ENCODE measurements at regions of chr1 and their contacts with region 1.

Region 1: DNA sequence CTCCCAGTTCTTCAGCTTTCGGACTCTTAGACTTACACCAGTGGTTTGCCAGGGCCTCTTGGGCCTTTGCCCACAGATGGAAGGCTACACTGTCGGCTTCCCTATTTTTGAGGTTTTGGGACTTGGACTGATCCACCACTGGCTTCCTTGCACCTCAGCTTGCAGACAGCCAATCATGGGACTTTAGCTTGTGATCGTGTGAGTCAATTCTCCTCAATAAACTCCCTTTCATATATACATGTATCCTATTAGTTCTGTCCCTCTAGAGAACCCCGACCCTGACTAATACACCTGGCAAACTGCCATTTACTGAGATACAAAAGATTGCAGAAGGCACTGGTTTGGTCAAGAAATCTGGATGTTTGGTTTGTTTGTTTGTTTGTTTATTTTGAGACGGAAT is 6.4 kb upstream of the RAB4A start:
- DNase-seq: no peak
- H3K4me3 ChIP-seq: no peak overlapping the region
- H3K27ac ChIP-seq: no peak overlapping the region
- H3K4me1 ChIP-seq: no peaks in the 10 kb centered on the region
- H3K27me3 ChIP-seq: no peaks in the 10 kb centered on the region
- CTCF ChIP-seq: no peak

Region 2: GRCh38 chr1:228527596-228527995 is 736.9 kb before region 1 on chr1:
- CTCF ChIA-PET with region 1: no interaction called
- POLR2A ChIA-PET with region 1: no interaction called
- intact Hi-C with region 1: no loop called
- DNase-seq: no peak
- H3K4me3 ChIP-seq: no peak overlapping the region
- H3K27ac ChIP-seq: no peak overlapping the region
- H3K4me1 ChIP-seq: no peaks in the 10 kb centered on the region
- H3K27me3 ChIP-seq: no peaks in the 10 kb centered on the region
- CTCF ChIP-seq: no peak

Region 3: DNA sequence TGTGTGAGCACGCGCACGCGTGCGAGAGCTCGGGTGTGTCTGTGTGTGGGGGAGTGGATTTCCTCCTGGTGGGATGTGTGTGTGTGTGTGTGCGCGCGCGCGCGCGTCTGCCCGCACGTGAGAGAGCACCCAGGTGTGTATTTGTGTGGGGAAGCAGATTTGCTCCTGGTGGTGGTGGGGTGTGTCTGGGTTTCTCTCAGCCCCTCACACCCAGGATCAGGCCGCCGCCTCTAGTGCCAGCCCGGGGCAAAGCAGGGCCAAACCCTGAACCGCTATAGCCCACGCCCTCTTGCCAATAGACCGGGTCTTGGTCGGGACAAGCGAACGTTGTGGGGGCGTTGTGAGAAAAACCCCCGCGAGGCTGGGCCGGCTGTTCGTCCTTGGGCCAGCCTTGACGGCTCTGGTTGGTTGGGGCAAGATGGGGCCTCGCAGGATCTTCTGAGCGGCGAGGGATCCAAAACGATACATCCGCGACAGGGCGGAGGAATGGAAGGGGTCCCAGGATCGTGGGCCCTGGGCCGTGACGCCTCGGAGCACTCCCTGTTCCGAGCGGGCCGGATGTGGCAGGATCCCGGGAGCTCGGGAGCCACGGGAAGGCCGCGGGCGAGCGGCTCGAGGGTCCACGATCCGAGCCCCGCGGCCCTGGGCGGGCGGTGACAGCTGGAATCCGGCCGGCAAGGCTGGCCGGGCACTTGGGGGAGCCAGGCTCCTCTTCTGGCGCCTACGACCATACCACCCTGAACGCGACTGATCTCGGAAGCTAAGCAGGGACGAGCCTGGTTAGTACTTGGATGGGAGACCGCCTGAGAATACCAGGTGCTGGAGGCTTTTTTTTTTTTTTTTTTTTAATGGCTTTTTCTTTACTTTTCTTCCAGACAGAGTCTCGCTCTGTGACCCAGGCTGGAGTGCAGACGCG is 709.2 kb before region 1 on chr1:
- CTCF ChIA-PET with region 1: no interaction called
- POLR2A ChIA-PET with region 1: no interaction called
- intact Hi-C with region 1: no loop called
- DNase-seq: peak; percentile 10
- H3K4me3 ChIP-seq: no peak overlapping the region
- H3K27ac ChIP-seq: no peak overlapping the region
- H3K4me1 ChIP-seq: no peaks in the 10 kb centered on the region
- H3K27me3 ChIP-seq: peaks cover 9% of the 10 kb centered on the region
- CTCF ChIP-seq: no peak

Region 4: DNA sequence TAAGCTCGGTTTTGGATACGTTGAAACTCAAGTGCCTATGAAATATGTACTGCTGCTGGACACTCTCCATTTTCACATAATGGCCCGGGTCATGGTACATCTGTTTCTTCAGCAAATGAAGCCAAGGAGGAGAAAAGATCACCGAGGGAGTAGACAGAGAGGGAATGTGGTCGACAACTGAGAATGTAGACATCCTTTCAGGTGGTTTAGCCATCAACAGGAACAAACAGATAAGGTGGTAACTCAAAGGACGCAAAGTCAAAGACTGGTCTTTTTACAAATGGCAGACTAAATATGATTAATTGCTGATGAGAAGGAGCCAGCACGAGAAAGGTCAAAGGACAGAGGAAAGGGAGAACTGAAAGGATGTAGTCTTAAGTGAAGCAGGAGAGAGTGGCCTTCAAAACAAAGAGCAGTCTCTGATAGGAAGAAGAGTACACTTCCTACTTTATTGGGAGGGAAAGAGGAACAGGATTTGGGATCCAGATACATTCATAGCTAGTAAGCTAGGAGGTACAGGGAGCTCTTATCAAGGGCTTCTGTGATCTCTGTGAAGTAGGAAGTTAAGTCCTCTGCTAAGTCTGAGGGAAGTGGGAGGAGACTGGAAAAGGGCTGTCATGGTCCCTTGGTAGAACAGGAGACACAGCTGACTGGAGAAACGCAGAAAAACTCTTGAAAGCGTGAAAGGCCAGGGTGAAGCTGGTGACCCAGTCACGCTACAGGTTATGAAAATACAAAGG is 215.3 kb after region 1 on chr1:
- CTCF ChIA-PET with region 1: interaction called, 16 read pairs
- POLR2A ChIA-PET with region 1: no interaction called
- intact Hi-C with region 1: loop called (anchors 2 kb)
- DNase-seq: no peak
- H3K4me3 ChIP-seq: no peak overlapping the region
- H3K27ac ChIP-seq: no peak overlapping the region
- H3K4me1 ChIP-seq: no peaks in the 10 kb centered on the region
- H3K27me3 ChIP-seq: no peaks in the 10 kb centered on the region
- CTCF ChIP-seq: no peak

Measured in A673 (cell line).